CD4-positive, alpha-beta T cell (primary cell): ENCODE measurements at regions of chrX and their contacts with region 1.

Region 1: GRCh38 chrX:2500267-2501075 is at the starts of genes DHRSX and ZBED1:
- DNase-seq: peak; percentile 12 to 77 (median 40)
- ATAC-seq: peak; percentile 63
- H3K4me3 ChIP-seq: peak within 1 kb of the TSS; percentile 67
- H3K4me3 Mint-ChIP-seq: peak within 1 kb of the TSS; percentile 89
- H3K27ac ChIP-seq: peak within 1 kb of the TSS; percentile 43 to 55
- H3K27ac Mint-ChIP-seq: peak within 1 kb of the TSS; percentile 86
- H3K4me1 ChIP-seq: peaks cover 32% of the 10 kb centered on the region
- H3K4me1 Mint-ChIP-seq: peaks cover 31% of the 10 kb centered on the region
- H3K27me3 ChIP-seq: no peaks in the 10 kb centered on the region
- H3K27me3 Mint-ChIP-seq: no peaks in the 10 kb centered on the region
- CTCF ChIP-seq: no peak
- total RNA-seq, gene DHRSX: 12.1 to 13.9 TPM
- total RNA-seq, gene ZBED1: 15.8 to 16.1 TPM

Region 2: GRCh38 chrX:1657367-1658070 is 843.0 kb before region 1 on chrX:
- CTCF ChIA-PET with region 1: no interaction called
- POLR2A ChIA-PET with region 1: no interaction called
- intact Hi-C with region 1: loop called in 1 of 2 experiments (anchors 10 kb)
- DNase-seq: peak in 13 of 14 experiments; percentile 11 to 91 (median 47)
- ATAC-seq: peak; percentile 37
- H3K4me3 ChIP-seq: peak overlapping the region; percentile 65
- H3K4me3 Mint-ChIP-seq: peak overlapping the region; percentile 87
- H3K27ac ChIP-seq: peak overlapping the region; percentile 59 to 80
- H3K27ac Mint-ChIP-seq: peak overlapping the region; percentile 96
- H3K4me1 ChIP-seq: peaks cover 36% of the 10 kb centered on the region
- H3K4me1 Mint-ChIP-seq: peaks cover 52% of the 10 kb centered on the region
- H3K27me3 ChIP-seq: no peaks in the 10 kb centered on the region
- H3K27me3 Mint-ChIP-seq: no peaks in the 10 kb centered on the region
- CTCF ChIP-seq: no peak

Region 3: GRCh38 chrX:2320580-2321327 is 179.7 kb before region 1 on chrX:
- CTCF ChIA-PET with region 1: no interaction called
- POLR2A ChIA-PET with region 1: no interaction called
- intact Hi-C with region 1: no loop called
- DNase-seq: peak in 3 of 14 experiments; percentile 3 to 37 (median 22)
- ATAC-seq: no peak
- H3K4me3 ChIP-seq: no peak overlapping the region
- H3K4me3 Mint-ChIP-seq: no peak overlapping the region
- H3K27ac ChIP-seq: no peak overlapping the region
- H3K27ac Mint-ChIP-seq: no peak overlapping the region
- H3K4me1 ChIP-seq: no peaks in the 10 kb centered on the region
- H3K4me1 Mint-ChIP-seq: no peaks in the 10 kb centered on the region
- H3K27me3 ChIP-seq: no peaks in the 10 kb centered on the region
- H3K27me3 Mint-ChIP-seq: no peaks in the 10 kb centered on the region
- CTCF ChIP-seq: no peak

Region 4: GRCh38 chrX:2463973-2464676 is 36.3 kb before region 1 on chrX:
- CTCF ChIA-PET with region 1: no interaction called
- POLR2A ChIA-PET with region 1: no interaction called
- intact Hi-C with region 1: no loop called
- DNase-seq: no peak
- ATAC-seq: no peak
- H3K4me3 ChIP-seq: no peak overlapping the region
- H3K4me3 Mint-ChIP-seq: no peak overlapping the region
- H3K27ac ChIP-seq: no peak overlapping the region
- H3K27ac Mint-ChIP-seq: no peak overlapping the region
- H3K4me1 ChIP-seq: no peaks in the 10 kb centered on the region
- H3K4me1 Mint-ChIP-seq: peaks cover 4% of the 10 kb centered on the region
- H3K27me3 ChIP-seq: no peaks in the 10 kb centered on the region
- H3K27me3 Mint-ChIP-seq: no peaks in the 10 kb centered on the region
- CTCF ChIP-seq: no peak

Region 5: GRCh38 chrX:2523911-2524310 is 23.4 kb after region 1 on chrX:
- CTCF ChIA-PET with region 1: no interaction called
- POLR2A ChIA-PET with region 1: no interaction called
- intact Hi-C with region 1: no loop called
- DNase-seq: no peak
- ATAC-seq: no peak
- H3K4me3 ChIP-seq: no peak overlapping the region
- H3K4me3 Mint-ChIP-seq: no peak overlapping the region
- H3K27ac ChIP-seq: no peak overlapping the region
- H3K27ac Mint-ChIP-seq: no peak overlapping the region
- H3K4me1 ChIP-seq: no peaks in the 10 kb centered on the region
- H3K4me1 Mint-ChIP-seq: no peaks in the 10 kb centered on the region
- H3K27me3 ChIP-seq: peaks cover 0 to 3% of the 10 kb centered on the region in 2 experiments
- H3K27me3 Mint-ChIP-seq: peaks cover 22% of the 10 kb centered on the region
- CTCF ChIP-seq: no peak

Region 6: GRCh38 chrX:2819345-2820135 is 319.1 kb after region 1 on chrX:
- CTCF ChIA-PET with region 1: no interaction called
- POLR2A ChIA-PET with region 1: no interaction called
- intact Hi-C with region 1: loop called in 1 of 2 experiments (anchors 5 kb)
- DNase-seq: peak in 2 of 14 experiments; percentile 4 to 6
- ATAC-seq: no peak
- H3K4me3 ChIP-seq: no peak overlapping the region
- H3K4me3 Mint-ChIP-seq: no peak overlapping the region
- H3K27ac ChIP-seq: no peak overlapping the region
- H3K27ac Mint-ChIP-seq: no peak overlapping the region
- H3K4me1 ChIP-seq: no peaks in the 10 kb centered on the region
- H3K4me1 Mint-ChIP-seq: peaks cover 7% of the 10 kb centered on the region
- H3K27me3 ChIP-seq: peaks cover 0 to 3% of the 10 kb centered on the region in 2 experiments
- H3K27me3 Mint-ChIP-seq: peaks cover 11% of the 10 kb centered on the region
- CTCF ChIP-seq: no peak